ENCODE measurements at regions of chr11 and their contacts with region 1.

Region 1: DNA sequence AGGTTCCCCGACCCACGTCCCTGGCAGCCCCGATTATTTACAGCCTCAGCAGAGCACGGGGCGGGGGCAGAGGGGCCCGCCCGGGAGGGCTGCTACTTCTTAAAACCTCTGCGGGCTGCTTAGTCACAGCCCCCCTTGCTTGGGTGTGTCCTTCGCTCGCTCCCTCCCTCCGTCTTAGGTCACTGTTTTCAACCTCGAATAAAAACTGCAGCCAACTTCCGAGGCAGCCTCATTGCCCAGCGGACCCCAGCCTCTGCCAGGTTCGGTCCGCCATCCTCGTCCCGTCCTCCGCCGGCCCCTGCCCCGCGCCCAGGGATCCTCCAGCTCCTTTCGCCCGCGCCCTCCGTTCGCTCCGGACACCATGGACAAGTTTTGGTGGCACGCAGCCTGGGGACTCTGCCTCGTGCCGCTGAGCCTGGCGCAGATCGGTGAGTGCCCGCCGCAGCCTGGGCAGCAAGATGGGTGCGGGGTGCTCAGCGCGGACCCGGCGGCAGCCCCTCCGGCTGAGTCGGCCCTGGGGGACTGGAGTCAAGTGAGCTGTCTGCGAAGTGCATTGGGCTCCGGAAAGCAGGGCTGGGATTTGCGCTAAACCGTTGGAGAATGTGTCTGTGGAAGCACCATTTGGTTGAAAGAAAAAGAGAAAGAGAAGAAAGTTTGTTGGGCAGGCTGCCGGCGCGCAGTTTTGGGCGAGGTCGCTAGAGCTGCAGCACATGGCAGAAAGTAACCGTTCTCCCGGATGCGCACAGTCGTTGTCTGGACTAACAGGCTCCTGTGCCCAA is at the start of gene CD44:
- DNase-seq: peak; percentile 78 to 93 (median 83)
- H3K4me3 ChIP-seq: peak within 1 kb of the TSS; percentile 84 to 99
- H3K4me3 Mint-ChIP-seq: peak within 1 kb of the TSS; percentile 95 to 99 (median 98)
- H3K27ac ChIP-seq: peak within 1 kb of the TSS; percentile 98
- H3K27ac Mint-ChIP-seq: peak within 1 kb of the TSS; percentile 93 to 99 (median 98)
- H3K4me1 ChIP-seq: peaks cover 42% of the 10 kb centered on the region
- H3K4me1 Mint-ChIP-seq: peaks cover 36 to 64% (median 44%) of the 10 kb centered on the region in 4 donors
- H3K27me3 ChIP-seq: no peaks in the 10 kb centered on the region
- H3K27me3 Mint-ChIP-seq: no peaks in the 10 kb centered on the region
- total RNA-seq, gene CD44: 808 to 809 TPM

Region 2: GRCh38 chr11:34997952-34998528 is 141.1 kb before region 1 on chr11:
- CTCF ChIA-PET with region 1: interaction called, 17 read pairs
- POLR2A ChIA-PET with region 1: interaction called, 20 read pairs
- intact Hi-C with region 1: loop called (anchors 1 kb)
- DNase-seq: peak in 4 of 5 donors; percentile 37 to 48 (median 44)
- H3K4me3 ChIP-seq: no peak overlapping the region
- H3K4me3 Mint-ChIP-seq: peak overlapping the region in 6 of 8 donors; percentile 62 to 78 (median 75)
- H3K27ac ChIP-seq: peak overlapping the region; percentile 45
- H3K27ac Mint-ChIP-seq: peak overlapping the region; percentile 57 to 95 (median 86)
- H3K4me1 ChIP-seq: peaks cover 24% of the 10 kb centered on the region
- H3K4me1 Mint-ChIP-seq: peaks cover 20 to 34% (median 24%) of the 10 kb centered on the region in 4 donors
- H3K27me3 ChIP-seq: no peaks in the 10 kb centered on the region
- H3K27me3 Mint-ChIP-seq: no peaks in the 10 kb centered on the region

Region 3: GRCh38 chr11:35030716-35031213 is 108.4 kb before region 1 on chr11:
- CTCF ChIA-PET with region 1: no interaction called
- POLR2A ChIA-PET with region 1: interaction called, 35 read pairs
- intact Hi-C with region 1: no loop called
- DNase-seq: peak in 1 of 5 donors; percentile 75
- H3K4me3 ChIP-seq: no peak overlapping the region
- H3K4me3 Mint-ChIP-seq: peak overlapping the region; percentile 3 to 89 (median 78)
- H3K27ac ChIP-seq: peak overlapping the region; percentile 46
- H3K27ac Mint-ChIP-seq: peak overlapping the region; percentile 92 to 98 (median 95)
- H3K4me1 ChIP-seq: peaks cover 44% of the 10 kb centered on the region
- H3K4me1 Mint-ChIP-seq: peaks cover 36 to 62% (median 46%) of the 10 kb centered on the region in 4 donors
- H3K27me3 ChIP-seq: no peaks in the 10 kb centered on the region
- H3K27me3 Mint-ChIP-seq: no peaks in the 10 kb centered on the region

Region 4: DNA sequence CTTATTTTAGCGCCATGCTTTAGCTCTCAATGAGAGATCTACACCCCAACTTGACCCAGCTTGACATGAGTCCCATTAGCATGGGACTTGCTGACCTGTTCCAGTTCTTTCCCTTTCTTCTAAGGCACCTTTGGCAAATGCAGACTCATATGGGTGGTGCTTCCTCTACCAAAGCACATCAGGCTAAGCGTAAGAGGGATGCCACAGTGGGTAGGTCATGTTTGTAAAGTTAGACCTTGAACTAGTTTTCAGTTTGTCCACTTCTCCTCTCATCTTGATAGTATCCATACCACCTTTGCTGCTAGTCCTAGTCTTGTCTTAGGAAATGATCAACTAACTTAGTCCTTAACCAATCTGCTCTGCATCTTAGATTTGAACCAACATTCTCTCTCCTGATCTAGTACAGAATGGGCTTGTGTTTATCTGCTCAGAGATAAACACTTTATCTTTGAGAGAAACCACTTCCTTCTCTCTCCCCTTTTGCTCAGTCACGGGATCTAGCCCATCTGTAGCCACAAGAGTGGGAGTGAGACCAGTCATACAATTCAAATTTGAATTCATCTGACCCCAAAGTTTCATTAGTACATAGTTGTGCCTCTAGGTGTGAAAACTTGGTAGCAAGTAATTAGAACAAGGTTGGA is 72.2 kb before region 1 on chr11:
- CTCF ChIA-PET with region 1: interaction called, 3 read pairs
- POLR2A ChIA-PET with region 1: interaction called, 36 read pairs
- intact Hi-C with region 1: no loop called
- DNase-seq: peak; percentile 34 to 53 (median 42)
- H3K4me3 ChIP-seq: no peak overlapping the region
- H3K4me3 Mint-ChIP-seq: peak overlapping the region; percentile 15 to 78 (median 67)
- H3K27ac ChIP-seq: peak overlapping the region; percentile 4
- H3K27ac Mint-ChIP-seq: peak overlapping the region; percentile 63 to 92 (median 89)
- H3K4me1 ChIP-seq: peaks cover 43% of the 10 kb centered on the region
- H3K4me1 Mint-ChIP-seq: peaks cover 4 to 32% (median 27%) of the 10 kb centered on the region in 4 donors
- H3K27me3 ChIP-seq: no peaks in the 10 kb centered on the region
- H3K27me3 Mint-ChIP-seq: no peaks in the 10 kb centered on the region

Region 5: DNA sequence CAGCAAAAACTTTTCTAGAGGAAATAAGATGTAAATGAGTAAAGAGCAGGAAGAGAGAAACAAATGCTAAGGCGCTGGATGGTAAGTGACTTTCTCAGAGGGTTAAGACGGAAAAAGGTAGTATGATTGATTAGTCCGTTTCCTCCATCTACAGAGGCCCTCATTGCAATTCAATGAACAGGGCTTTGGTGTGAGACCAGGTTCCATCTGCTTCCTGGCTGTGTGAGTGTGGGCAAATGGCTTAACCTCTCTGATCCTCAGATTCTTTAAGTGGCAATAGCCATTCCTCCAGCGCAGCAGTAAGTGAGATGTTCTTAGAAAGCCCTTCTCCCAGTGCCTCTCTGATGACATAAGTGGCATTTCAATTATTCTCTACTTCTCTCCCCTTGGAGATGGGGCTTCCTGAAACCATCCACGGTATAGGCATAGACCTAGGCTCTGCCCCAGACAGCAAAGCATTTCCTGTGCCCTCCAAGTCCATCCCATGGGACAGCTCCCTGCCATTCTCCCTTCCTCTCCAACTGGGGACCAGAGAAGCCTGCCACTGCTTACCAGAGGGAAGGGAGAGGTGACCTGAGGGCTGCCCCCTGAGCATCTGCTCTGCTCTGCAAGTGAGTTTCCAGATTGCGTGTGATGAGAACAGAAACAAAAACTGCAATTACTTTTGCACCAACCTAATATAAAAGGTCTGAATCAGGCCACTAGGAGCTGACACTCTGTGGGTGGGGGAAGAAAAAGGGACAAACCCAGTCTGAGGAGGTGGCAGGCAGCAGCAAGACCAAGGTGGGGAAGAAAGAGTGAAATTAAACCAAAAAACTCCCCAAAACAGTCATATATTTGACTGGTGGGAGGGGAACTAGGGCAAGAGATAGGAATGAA is 12.9 kb before region 1 on chr11:
- CTCF ChIA-PET with region 1: interaction called, 6 read pairs
- POLR2A ChIA-PET with region 1: interaction called, 63 read pairs
- intact Hi-C with region 1: loop called (anchors 2 kb)
- DNase-seq: peak in 3 of 5 donors; percentile 41 to 70 (median 53)
- H3K4me3 ChIP-seq: peak overlapping the region; percentile 23 to 42
- H3K4me3 Mint-ChIP-seq: peak overlapping the region; percentile 54 to 80 (median 74)
- H3K27ac ChIP-seq: peak overlapping the region; percentile 40
- H3K27ac Mint-ChIP-seq: peak overlapping the region; percentile 80 to 92 (median 89)
- H3K4me1 ChIP-seq: peaks cover 55% of the 10 kb centered on the region
- H3K4me1 Mint-ChIP-seq: peaks cover 47 to 65% (median 60%) of the 10 kb centered on the region in 4 donors
- H3K27me3 ChIP-seq: no peaks in the 10 kb centered on the region
- H3K27me3 Mint-ChIP-seq: no peaks in the 10 kb centered on the region

Region 6: DNA sequence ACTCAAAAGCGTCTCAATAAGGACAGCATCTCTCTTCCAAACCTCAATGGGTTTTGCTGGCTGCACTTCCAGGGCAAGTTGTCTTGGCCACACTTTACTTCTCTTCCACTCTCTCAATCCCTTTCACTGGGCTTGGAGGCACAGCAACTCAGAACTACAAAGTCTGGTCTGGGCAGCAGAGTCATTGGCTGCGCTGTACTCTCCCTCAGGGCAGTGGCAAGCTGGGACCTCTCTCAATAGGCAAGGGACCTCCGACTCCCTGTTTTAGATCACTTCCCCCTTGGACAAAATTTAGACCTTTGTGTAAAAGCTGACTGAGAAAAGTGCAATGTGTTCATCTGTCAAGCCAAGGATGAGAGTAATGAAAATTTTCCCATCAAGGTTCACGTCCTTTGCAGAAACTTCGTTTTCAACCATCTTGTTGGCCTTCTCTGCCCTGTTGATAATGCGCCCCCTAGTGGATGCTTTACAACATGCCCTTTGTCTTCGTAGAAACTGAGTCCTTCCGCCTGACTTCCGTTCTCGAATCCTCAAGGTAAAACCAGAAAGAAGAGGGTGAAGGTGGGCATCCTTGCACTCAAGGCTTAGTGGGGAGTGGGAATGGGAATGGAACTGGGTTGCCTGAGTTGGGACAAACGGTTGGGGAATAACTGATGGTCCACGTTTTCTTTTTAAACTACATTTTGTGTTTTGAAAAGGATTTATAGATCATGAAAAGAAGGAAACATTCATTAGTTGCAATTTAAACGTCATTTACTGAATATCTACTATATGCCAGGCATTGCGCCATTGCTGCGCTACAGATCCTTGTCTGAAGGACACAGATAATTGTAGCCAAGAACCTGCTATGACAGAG is 99.0 kb after region 1 on chr11:
- CTCF ChIA-PET with region 1: interaction called, 7 read pairs
- POLR2A ChIA-PET with region 1: interaction called, 15 read pairs
- intact Hi-C with region 1: loop called (anchors 2 kb)
- DNase-seq: peak; percentile 50 to 64 (median 55)
- H3K4me3 ChIP-seq: no peak overlapping the region
- H3K4me3 Mint-ChIP-seq: peak overlapping the region in 6 of 8 donors; percentile 4 to 66 (median 38)
- H3K27ac ChIP-seq: no peak overlapping the region
- H3K27ac Mint-ChIP-seq: peak overlapping the region; percentile 78 to 97 (median 90)
- H3K4me1 ChIP-seq: peaks cover 73% of the 10 kb centered on the region
- H3K4me1 Mint-ChIP-seq: peaks cover 61 to 94% (median 76%) of the 10 kb centered on the region in 4 donors
- H3K27me3 ChIP-seq: no peaks in the 10 kb centered on the region
- H3K27me3 Mint-ChIP-seq: no peaks in the 10 kb centered on the region

Region 7: DNA sequence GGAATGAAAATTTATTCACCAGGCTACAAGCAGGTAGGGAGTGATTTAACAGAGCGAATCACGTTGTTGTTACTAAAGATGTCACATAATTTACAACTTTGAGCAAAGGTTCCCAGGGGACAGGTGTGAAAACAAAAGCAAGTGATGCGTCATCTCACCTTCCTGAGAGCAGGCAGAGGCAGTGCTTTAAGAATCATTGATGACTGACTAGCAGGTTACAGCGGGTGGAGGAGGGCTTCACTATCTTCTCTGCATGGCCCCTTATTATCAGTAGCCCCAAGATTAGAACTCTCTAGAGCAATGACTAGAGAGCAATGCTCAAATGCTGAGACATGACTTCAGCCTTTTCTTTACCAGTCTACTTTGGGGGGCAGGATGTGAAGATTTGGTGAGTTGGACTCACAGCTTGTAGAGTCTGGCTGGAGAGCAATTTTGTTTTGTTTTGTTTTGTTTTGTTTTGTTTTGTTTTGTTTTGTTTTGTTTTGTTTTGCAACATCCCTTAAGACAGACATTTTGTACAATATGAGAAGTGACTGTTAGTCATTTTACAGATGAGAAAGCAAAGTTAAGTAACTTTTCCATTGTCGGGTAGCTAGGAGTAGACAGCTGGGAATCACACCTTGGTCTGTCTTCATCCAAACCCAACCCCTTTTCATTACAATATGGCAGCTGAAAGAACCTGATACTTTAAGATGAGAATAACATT is 195.4 kb after region 1 on chr11:
- CTCF ChIA-PET with region 1: no interaction called
- POLR2A ChIA-PET with region 1: interaction called, 18 read pairs
- intact Hi-C with region 1: no loop called
- DNase-seq: peak; percentile 22 to 63 (median 26)
- H3K4me3 ChIP-seq: no peak overlapping the region
- H3K4me3 Mint-ChIP-seq: peak overlapping the region in 2 of 8 donors; percentile 31 to 59
- H3K27ac ChIP-seq: no peak overlapping the region
- H3K27ac Mint-ChIP-seq: peak overlapping the region; percentile 19 to 93 (median 82)
- H3K4me1 ChIP-seq: peaks cover 42% of the 10 kb centered on the region
- H3K4me1 Mint-ChIP-seq: peaks cover 35 to 47% (median 42%) of the 10 kb centered on the region in 4 donors
- H3K27me3 ChIP-seq: no peaks in the 10 kb centered on the region
- H3K27me3 Mint-ChIP-seq: peaks cover 0 to 2% of the 10 kb centered on the region in 2 donors